GM12878 (cell line): ENCODE measurements at regions of chr5 and their contacts with region 1.

Region 1: DNA sequence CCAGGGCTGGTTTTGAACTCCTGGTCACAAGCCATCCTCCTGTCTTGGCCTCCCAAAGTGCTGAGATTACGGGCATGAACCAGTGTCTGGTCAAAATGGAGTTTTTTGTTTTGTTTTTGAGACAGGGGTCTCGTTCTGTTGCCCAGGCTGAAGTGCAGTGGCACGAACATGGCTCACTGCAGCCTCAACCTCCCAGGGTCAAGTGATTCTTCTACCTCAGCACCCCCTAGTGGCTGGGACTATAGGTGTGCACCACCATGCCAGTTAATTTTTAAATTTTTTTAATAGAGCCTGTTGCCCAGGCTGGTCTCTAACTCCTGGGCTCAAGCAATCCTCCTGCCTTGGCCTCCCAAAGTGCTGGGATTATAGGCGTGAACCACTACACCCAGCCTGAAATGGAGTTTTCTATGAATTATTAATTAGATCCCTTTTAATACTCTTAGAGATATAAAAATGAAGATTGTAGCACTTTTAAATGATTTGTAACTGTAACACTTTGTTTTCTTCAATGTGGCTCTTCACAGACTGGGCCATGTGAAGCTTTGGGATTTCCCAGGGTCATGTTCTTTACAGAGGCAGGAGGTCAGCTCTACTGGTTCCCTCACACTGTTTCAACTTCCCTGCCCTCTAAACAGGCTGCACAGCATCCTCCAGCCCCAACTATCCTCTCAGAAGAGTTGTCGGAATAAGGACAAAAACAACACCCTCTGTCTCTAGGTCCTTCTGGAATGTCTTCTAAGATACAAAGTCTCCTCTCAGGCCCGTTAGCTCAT is 32.7 kb upstream of the SPARC start:
- DNase-seq: no peak
- ATAC-seq: peak; percentile 45
- H3K4me3 ChIP-seq: no peak overlapping the region
- H3K27ac ChIP-seq: peak overlapping the region; percentile 94
- H3K4me1 ChIP-seq: peaks cover 55% of the 10 kb centered on the region
- H3K27me3 ChIP-seq: no peaks in the 10 kb centered on the region
- CTCF ChIP-seq: peak; percentile 28 to 58 (median 53); a peak in 5 of 6 replicates
- EP300 ChIP-seq: no peak
- POLR2A ChIP-seq: no peak
- RAD21 ChIP-seq: peak; percentile 71

Region 2: DNA sequence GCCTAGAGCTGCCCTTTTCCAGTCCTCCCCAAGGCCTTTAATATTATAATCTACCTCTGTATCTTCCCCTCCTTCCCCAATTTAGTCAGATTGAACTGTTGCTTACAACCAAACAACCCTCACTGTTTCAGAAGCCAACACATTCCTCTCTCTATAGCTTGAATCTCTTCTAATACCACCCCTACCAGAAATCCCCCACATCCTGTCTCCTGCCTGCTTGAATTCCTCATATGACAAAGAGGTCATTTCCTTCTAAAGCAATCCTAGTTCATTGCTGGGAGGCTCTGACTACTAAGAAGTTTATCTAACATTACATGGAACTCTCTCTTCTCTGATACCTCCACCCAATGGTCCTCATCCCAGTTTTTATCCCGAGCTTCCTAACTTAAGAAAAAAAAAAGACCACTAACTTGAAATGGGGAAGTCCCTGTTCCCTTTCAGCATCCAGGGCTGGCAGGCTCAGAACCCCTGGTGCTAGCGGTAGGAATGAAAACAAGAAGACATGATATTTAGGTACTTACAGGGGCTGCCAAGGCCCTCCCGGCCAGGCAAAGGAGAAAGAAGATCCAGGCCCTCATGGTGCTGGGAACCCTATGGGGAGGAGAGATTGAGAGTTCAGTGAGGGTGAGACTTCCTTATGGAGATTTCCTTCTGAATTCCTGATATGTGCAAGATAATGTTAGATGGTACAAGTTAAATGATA is 43.7 kb before region 1 on chr5:
- CTCF ChIA-PET with region 1: interaction called, 23 read pairs
- POLR2A ChIA-PET with region 1: no interaction called
- RAD21 ChIA-PET with region 1: interaction called, 9 read pairs
- SMC1A ChIA-PET with region 1: interaction called, 5 read pairs
- in situ Hi-C with region 1: no loop called
- intact Hi-C with region 1: loop called (anchors 5 kb)
- DNase-seq: no peak
- ATAC-seq: peak; percentile 79
- H3K4me3 ChIP-seq: no peak overlapping the region
- H3K27ac ChIP-seq: peak overlapping the region; percentile 65
- H3K4me1 ChIP-seq: peaks cover 27% of the 10 kb centered on the region
- H3K27me3 ChIP-seq: no peaks in the 10 kb centered on the region
- CTCF ChIP-seq: no peak
- EP300 ChIP-seq: no peak
- POLR2A ChIP-seq: no peak
- RAD21 ChIP-seq: no peak

Region 3: DNA sequence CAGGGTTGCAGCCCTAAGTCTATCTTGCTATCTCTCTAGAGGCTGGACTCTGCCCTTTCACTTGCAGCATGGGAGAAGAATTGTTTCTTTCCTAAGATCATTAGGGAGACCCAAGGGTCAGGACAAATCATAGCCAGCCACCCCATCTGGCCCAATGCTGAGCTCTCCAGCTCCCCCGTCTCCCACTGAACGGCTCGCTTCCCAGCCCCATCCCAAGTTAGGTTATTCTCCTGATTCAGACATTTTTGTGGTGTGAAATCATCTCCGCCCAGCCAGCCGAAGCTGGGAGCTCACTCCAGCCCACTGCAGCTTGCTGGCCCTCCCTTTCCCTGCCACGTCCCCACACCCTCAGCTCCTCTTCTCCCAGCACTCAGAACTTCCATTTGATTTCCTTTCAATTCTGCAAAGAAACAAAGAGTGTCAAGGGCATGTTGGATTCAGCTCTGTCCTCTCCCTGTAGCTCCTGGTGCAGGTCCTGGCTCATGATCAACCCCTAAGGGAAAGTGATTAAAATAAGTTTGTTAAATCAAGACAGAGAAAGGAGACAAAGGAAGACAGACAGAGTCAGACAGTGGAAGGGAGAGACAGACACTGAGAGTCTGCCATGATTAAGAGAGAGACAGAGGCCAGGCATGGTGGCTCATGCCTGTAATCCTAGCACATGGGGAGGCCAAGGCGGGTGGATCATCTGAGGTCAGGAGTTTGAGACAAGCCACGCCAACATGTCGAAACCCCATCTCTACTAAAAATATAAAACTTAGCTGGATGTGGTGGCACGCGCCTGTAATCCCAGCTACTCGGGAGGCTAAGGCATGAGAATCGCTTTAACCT is 20.1 kb before region 1 on chr5:
- CTCF ChIA-PET with region 1: interaction called, 88 read pairs
- POLR2A ChIA-PET with region 1: interaction called, 6 read pairs
- RAD21 ChIA-PET with region 1: interaction called, 29 read pairs
- SMC1A ChIA-PET with region 1: interaction called, 103 read pairs
- in situ Hi-C with region 1: no loop called
- intact Hi-C with region 1: no loop called
- DNase-seq: no peak
- ATAC-seq: no peak
- H3K4me3 ChIP-seq: no peak overlapping the region
- H3K27ac ChIP-seq: no peak overlapping the region
- H3K4me1 ChIP-seq: peaks cover 42% of the 10 kb centered on the region
- H3K27me3 ChIP-seq: no peaks in the 10 kb centered on the region
- CTCF ChIP-seq: no peak
- EP300 ChIP-seq: no peak
- POLR2A ChIP-seq: no peak
- RAD21 ChIP-seq: no peak

Region 4: DNA sequence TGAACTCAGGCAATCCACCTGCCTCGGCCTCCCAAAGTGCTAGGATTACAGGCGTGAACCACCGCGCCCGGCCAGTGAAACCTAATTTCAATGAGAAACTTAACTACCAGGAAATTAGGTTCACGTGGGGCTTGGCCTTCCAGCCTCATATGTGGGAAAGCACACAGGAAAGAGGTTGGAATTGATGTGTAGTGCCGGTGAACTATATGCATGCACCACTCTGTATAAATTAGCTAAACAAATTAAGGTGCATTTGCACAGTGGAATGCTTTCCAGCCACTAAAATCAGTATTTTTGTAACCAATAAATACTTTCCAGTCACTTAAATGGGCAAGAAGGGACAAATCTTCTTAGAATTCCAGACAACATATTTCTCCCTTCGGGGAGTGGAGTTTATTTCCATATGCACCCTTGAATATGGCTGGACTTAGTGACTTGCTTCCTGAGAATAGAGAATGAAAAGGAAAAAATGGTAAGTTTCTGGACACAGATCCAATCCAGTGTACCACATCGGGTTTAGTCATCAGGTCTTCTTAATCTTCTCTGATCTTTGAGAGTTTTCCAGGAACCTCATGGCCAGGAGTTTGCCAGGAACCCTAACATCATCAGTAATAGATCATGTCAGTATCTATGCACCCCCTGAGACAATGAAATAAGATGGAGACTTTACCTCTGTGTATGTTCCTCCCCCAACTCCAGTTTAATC is 14.1 kb after region 1 on chr5:
- CTCF ChIA-PET with region 1: interaction called, 294 read pairs
- POLR2A ChIA-PET with region 1: interaction called, 8 read pairs
- RAD21 ChIA-PET with region 1: interaction called, 125 read pairs
- SMC1A ChIA-PET with region 1: interaction called, 154 read pairs
- in situ Hi-C with region 1: no loop called
- intact Hi-C with region 1: no loop called
- DNase-seq: no peak
- ATAC-seq: no peak
- H3K4me3 ChIP-seq: no peak overlapping the region
- H3K27ac ChIP-seq: no peak overlapping the region
- H3K4me1 ChIP-seq: no peaks in the 10 kb centered on the region
- H3K27me3 ChIP-seq: no peaks in the 10 kb centered on the region
- CTCF ChIP-seq: no peak
- EP300 ChIP-seq: no peak
- POLR2A ChIP-seq: no peak
- RAD21 ChIP-seq: no peak

Region 5: GRCh38 chr5:151751091-151751490 is 31.7 kb after region 1 on chr5:
- CTCF ChIA-PET with region 1: interaction called, 15 read pairs
- POLR2A ChIA-PET with region 1: interaction called, 18 read pairs
- RAD21 ChIA-PET with region 1: interaction called, 29 read pairs
- SMC1A ChIA-PET with region 1: interaction called, 34 read pairs
- in situ Hi-C with region 1: no loop called
- intact Hi-C with region 1: no loop called
- DNase-seq: no peak
- ATAC-seq: no peak
- H3K4me3 ChIP-seq: no peak overlapping the region
- H3K27ac ChIP-seq: no peak overlapping the region
- H3K4me1 ChIP-seq: peaks cover 29% of the 10 kb centered on the region
- H3K27me3 ChIP-seq: no peaks in the 10 kb centered on the region
- CTCF ChIP-seq: no peak
- EP300 ChIP-seq: no peak
- POLR2A ChIP-seq: no peak
- RAD21 ChIP-seq: no peak

Region 6: DNA sequence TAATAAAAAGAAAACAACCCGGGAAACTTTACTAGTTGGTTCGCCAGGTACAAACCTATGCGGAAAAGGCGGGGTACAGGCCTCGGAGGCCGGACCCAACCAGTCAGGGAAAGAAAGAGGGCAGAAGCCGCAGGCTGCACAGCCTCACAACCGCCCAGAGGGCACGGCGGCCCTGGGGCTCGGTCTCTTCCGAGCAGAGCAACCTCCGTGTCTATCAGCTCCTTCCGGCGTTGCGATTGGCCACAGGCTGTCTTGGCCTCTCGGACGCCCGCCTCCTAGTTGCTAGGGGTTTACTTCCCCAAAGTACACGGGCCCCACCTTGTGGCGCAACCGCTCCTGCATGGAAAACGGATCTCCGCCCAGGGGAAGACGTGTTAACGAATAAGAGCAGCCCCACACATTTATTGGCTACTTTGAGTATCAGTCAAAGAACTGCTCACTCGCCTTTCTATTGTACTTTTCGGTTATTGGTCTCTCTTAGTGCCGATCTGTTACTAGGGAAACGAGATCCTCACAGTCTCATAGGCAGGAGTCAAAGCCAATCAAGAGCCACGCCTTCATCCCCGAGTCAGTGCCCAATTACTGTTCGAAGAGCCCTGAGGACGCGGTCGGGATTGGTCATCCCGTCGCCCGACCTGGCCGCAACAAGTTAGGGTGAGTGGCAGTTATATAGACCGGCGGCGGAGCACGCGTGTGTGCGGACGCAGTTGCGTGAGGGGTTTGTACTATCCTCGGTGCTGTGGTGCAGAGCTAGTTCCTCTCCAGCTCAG is 52.0 kb after region 1 on chr5 and contains the start of gene G3BP1:
- CTCF ChIA-PET with region 1: interaction called, 31 read pairs
- POLR2A ChIA-PET with region 1: interaction called, 22 read pairs
- RAD21 ChIA-PET with region 1: interaction called, 46 read pairs
- SMC1A ChIA-PET with region 1: interaction called, 22 read pairs
- in situ Hi-C with region 1: no loop called
- intact Hi-C with region 1: loop called (anchors 1 kb)
- DNase-seq: peak; percentile 100
- ATAC-seq: peak; percentile 87
- H3K4me3 ChIP-seq: peak within 1 kb of the TSS; percentile 97
- H3K27ac ChIP-seq: peak within 1 kb of the TSS; percentile 98
- H3K4me1 ChIP-seq: peaks cover 10% of the 10 kb centered on the region
- H3K27me3 ChIP-seq: no peaks in the 10 kb centered on the region
- CTCF ChIP-seq: peak; percentile 64 to 99 (median 71); a peak in 4 of 6 replicates
- EP300 ChIP-seq: no peak
- POLR2A ChIP-seq: peak; percentile 18
- RAD21 ChIP-seq: peak; percentile 67
- polyA plus RNA-seq, gene G3BP1: 49.7 to 52.7 TPM